ENCODE measurements at regions of chr13 and their contacts with region 1.

Region 1: DNA sequence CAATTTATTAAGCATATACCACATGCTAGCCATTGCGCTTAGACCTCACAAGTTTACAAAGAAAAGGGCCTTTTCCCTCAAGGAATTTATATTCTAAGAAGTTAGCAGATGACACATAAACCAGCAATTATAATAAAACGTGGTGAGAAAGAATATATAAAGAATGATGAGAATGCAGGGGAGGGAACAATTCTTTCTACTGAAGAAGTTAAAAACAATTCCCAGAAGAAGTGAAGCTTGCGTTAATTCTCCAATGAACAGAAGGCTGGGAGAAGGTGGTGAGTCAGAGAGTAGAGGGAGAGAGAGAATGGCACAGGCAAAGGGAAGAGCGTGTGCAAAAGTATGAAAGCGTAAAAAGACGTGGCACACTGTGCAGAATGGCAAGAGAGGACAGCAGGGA is 69.5 kb upstream of the ZDHHC20 start:
- DNase-seq: no peak
- H3K4me3 ChIP-seq: no peak overlapping the region
- H3K27ac ChIP-seq: no peak overlapping the region
- H3K4me1 ChIP-seq: no peaks in the 10 kb centered on the region
- H3K27me3 ChIP-seq: no peaks in the 10 kb centered on the region
- CTCF ChIP-seq: no peak

Region 2: GRCh38 chr13:21164631-21165030 is 364.0 kb before region 1 on chr13:
- CTCF ChIA-PET with region 1: interaction called, 15 read pairs
- POLR2A ChIA-PET with region 1: no interaction called
- intact Hi-C with region 1: no loop called
- DNase-seq: no peak
- H3K4me3 ChIP-seq: no peak overlapping the region
- H3K27ac ChIP-seq: no peak overlapping the region
- H3K4me1 ChIP-seq: no peaks in the 10 kb centered on the region
- H3K27me3 ChIP-seq: no peaks in the 10 kb centered on the region
- CTCF ChIP-seq: no peak

Region 3: GRCh38 chr13:21567714-21568113 is 39.1 kb after region 1 on chr13:
- CTCF ChIA-PET with region 1: no interaction called
- POLR2A ChIA-PET with region 1: no interaction called
- intact Hi-C with region 1: no loop called
- DNase-seq: no peak
- H3K4me3 ChIP-seq: no peak overlapping the region
- H3K27ac ChIP-seq: no peak overlapping the region
- H3K4me1 ChIP-seq: no peaks in the 10 kb centered on the region
- H3K27me3 ChIP-seq: no peaks in the 10 kb centered on the region
- CTCF ChIP-seq: no peak